ENCODE measurements at regions of chr16 and their contacts with region 1.

Region 1: DNA sequence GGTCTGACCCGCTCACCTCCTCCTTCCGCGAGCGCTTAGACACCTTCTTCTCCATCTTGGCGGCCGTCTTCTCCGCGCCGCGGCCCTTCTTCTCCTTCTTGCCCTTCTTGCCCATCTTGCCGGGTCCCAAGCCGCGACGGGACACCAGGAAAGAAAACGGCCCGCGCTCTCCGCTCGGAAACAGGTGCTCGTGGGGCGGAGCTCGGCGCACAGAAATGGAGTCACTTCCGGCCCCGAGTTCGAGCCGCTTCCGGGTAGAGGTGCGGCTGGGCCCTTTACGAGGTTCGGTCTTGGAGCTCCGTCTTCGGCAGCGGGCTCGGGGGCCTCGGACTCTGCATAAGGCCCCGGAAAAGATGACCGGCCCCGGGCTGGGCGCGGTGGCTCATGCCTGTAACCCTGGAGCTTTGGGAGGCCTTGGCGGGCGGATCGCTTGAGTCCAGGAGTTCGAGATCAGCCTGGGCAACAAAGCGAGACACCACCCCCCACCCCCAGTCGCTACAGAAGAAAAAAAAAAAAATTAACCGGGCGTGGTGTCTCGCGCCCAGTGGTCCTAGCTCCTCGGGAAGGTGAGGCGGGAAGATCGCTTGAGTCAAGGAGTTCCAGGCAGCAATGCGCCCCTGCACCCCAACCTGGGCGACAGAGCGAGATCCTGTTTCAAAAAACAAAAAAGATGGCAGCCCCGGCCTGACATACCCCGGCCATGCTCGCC is at the start of gene KLHDC4:
- DNase-seq: peak; percentile 94
- ATAC-seq: peak; percentile 88
- H3K4me3 Mint-ChIP-seq: peak within 1 kb of the TSS; percentile 100
- H3K27ac Mint-ChIP-seq: peak within 1 kb of the TSS; percentile 99
- H3K4me1 Mint-ChIP-seq: peaks cover 35% of the 10 kb centered on the region
- H3K27me3 Mint-ChIP-seq: no peaks in the 10 kb centered on the region
- total RNA-seq, gene KLHDC4: 67.0 to 77.3 TPM

Region 2: GRCh38 chr16:87531418-87531817 is 234.5 kb before region 1 on chr16:
- CTCF ChIA-PET with region 1: no interaction called
- POLR2A ChIA-PET with region 1: no interaction called
- intact Hi-C with region 1: no loop called
- DNase-seq: no peak
- ATAC-seq: no peak
- H3K4me3 Mint-ChIP-seq: no peak overlapping the region
- H3K27ac Mint-ChIP-seq: no peak overlapping the region
- H3K4me1 Mint-ChIP-seq: no peaks in the 10 kb centered on the region
- H3K27me3 Mint-ChIP-seq: peaks cover 24% of the 10 kb centered on the region

Region 3: DNA sequence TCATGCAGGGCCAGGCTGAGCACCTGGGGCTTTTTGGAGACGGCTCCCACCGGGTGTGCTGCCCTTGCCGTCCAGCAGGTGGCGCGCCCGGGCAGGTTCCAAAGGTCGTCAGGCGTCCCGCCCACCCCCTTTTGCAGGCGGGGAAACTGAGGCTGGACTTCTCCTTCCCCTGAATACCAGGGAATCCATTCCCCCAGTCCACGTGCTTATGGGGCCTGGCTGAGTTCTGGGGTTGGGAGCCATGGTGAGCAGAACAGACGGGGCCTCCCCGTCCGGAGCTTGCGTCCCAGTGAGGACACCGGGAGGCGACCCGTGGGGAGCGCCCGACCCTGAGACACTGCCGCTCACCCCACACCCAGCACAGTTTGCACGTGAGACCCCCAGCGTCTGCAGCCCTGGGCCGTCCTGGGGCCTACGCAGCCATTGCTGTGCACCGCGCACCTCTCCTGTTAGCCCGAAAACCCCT is 215.4 kb before region 1 on chr16:
- CTCF ChIA-PET with region 1: no interaction called
- POLR2A ChIA-PET with region 1: no interaction called
- intact Hi-C with region 1: loop called (anchors 2 kb)
- DNase-seq: peak; percentile 77
- ATAC-seq: peak; percentile 39
- H3K4me3 Mint-ChIP-seq: no peak overlapping the region
- H3K27ac Mint-ChIP-seq: no peak overlapping the region
- H3K4me1 Mint-ChIP-seq: no peaks in the 10 kb centered on the region
- H3K27me3 Mint-ChIP-seq: peaks cover 15% of the 10 kb centered on the region

Region 4: GRCh38 chr16:87581833-87582203 is 184.1 kb before region 1 on chr16:
- CTCF ChIA-PET with region 1: no interaction called
- POLR2A ChIA-PET with region 1: no interaction called
- intact Hi-C with region 1: loop called in 1 of 2 experiments (anchors 5 kb)
- DNase-seq: no peak
- ATAC-seq: no peak
- H3K4me3 Mint-ChIP-seq: no peak overlapping the region
- H3K27ac Mint-ChIP-seq: no peak overlapping the region
- H3K4me1 Mint-ChIP-seq: no peaks in the 10 kb centered on the region
- H3K27me3 Mint-ChIP-seq: peaks cover 19% of the 10 kb centered on the region

Region 5: DNA sequence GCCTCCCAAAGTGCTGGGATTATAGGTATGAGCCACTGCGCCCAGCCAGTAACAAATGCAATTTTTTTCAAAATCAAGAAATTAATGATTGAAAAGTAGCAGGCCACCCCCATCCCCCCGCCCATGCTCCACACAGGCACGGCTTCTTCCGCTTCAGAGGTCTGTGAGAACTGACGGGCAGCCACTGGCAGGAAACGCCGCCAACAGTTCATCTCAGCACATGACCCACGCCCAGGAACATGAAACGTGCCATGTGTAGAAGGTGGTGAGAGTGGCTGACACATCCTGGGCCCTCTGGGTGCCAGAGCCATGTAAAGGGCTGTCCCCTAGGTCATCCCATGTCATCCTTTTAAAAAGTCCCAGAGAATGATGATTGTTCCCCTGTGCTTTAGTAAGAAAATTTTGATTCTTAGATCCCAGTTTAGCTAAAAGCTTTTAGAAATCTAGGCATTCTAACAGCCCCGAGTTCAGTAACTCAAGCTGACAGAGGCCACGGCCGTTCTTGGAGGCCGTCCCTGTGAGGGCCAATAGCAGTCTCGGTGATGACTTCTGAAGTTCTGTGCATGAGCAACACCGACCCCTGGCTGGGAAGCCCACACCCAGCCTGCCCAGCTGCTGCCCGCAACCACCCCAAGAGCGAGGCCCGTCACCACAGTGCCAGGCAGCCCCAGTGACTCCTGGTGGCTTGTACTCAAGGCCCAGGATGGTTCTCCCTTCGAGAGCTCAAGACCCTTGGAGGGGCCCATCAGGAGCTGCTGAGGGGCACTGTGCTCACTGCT is 52.3 kb before region 1 on chr16:
- CTCF ChIA-PET with region 1: interaction called, 8 read pairs
- POLR2A ChIA-PET with region 1: no interaction called
- intact Hi-C with region 1: loop called in 1 of 2 experiments (anchors 1 kb)
- DNase-seq: peak; percentile 84
- ATAC-seq: peak; percentile 97
- H3K4me3 Mint-ChIP-seq: no peak overlapping the region
- H3K27ac Mint-ChIP-seq: peak overlapping the region; percentile 75
- H3K4me1 Mint-ChIP-seq: peaks cover 27% of the 10 kb centered on the region
- H3K27me3 Mint-ChIP-seq: no peaks in the 10 kb centered on the region

Measured in activated CD4-positive, alpha-beta T cell treated with anti-CD3 and anti-CD28 coated beads for 36 hours (primary cell).